AG04449 (cell line): ENCODE measurements at regions of chr10 and their contacts with region 1.

Region 1: DNA sequence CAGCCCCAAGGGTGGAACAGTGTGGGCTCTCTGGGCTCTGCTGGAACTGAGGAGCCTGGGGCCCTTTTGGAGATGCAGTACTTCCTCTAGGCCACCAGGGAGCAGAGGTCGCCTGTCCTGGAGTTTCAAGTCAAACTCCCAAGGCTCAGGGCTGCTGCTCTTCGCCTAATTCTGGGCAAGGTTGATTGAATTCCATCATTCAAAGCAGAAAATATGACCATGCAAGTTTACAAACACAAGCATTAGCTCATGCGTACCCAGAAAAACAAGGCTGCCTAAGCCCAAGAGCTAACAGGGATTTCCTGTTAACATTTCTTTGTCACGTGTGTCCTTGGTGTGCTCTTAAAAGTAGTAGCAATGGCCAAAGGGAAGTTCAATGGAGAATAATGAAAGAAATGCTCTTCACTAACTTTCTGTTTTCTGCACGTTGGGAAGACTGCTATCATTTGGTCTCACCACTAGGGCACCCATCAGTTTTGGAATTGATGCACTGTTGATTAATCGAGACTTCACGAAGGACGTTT is 20.1 kb downstream of the LDB3 start:
- DNase-seq: no peak
- H3K4me3 ChIP-seq: no peak overlapping the region; the same call in 1 of the 2 replicates
- CTCF ChIP-seq: peak; percentile 78

Region 2: GRCh38 chr10:86644152-86644793 is 44.2 kb before region 1 on chr10:
- CTCF ChIA-PET with region 1: interaction called, 10 read pairs
- POLR2A ChIA-PET with region 1: no interaction called
- DNase-seq: no peak
- H3K4me3 ChIP-seq: no peak overlapping the region
- CTCF ChIP-seq: peak; percentile 33

Region 3: DNA sequence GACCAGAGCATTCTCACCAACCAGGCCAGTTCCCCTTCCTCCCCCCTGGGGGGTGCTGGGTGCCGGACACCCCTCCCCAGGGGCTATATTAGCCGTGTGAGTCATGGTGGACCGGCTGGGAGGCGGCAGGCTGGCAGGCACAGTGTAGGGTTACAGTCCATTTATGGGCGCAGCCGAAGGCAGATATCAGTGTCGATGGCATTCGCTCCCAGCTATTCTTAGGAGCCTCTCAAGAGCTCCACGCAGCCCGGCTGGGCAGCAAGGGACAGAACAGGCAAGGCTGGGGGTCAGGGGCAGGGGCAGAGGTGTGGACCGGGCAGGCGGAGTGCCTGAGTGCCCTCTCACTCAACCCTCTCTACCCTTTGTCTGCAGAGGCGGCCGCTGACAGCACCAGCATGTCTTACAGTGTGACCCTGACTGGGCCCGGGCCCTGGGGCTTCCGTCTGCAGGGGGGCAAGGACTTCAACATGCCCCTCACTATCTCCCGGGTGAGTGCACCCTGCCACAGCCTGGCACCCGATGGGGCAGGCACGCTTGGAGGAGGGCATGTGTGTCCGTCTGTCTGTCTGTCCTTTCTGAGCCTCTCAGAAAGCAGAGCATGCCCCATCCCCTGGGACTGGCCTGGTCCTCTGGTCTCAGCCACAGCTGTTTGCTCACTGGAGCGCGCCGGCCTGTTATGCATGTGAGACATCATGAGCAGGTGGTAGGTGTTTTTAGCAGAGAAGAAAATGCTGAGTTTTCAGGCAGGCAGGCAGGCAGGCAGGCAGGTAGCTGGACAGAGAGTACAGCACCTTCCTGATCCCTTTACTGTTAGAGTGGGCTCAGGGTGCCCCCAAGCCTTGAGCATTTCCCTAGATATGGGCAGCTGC is 19.9 kb before region 1 on chr10 and contains the start of gene LDB3:
- CTCF ChIA-PET with region 1: interaction called, 18 read pairs
- POLR2A ChIA-PET with region 1: no interaction called
- DNase-seq: peak; percentile 41
- H3K4me3 ChIP-seq: peak within 1 kb of the TSS; percentile 48
- CTCF ChIP-seq: no peak

Region 4: GRCh38 chr10:86673827-86674581 is 14.5 kb before region 1 on chr10:
- CTCF ChIA-PET with region 1: interaction called, 18 read pairs
- POLR2A ChIA-PET with region 1: interaction called, 5 read pairs
- DNase-seq: no peak
- H3K4me3 ChIP-seq: no peak overlapping the region
- CTCF ChIP-seq: no peak

Region 5: GRCh38 chr10:86857128-86857721 is 168.8 kb after region 1 on chr10:
- CTCF ChIA-PET with region 1: no interaction called
- POLR2A ChIA-PET with region 1: no interaction called
- DNase-seq: no peak
- H3K4me3 ChIP-seq: no peak overlapping the region
- CTCF ChIP-seq: no peak

Region 6: DNA sequence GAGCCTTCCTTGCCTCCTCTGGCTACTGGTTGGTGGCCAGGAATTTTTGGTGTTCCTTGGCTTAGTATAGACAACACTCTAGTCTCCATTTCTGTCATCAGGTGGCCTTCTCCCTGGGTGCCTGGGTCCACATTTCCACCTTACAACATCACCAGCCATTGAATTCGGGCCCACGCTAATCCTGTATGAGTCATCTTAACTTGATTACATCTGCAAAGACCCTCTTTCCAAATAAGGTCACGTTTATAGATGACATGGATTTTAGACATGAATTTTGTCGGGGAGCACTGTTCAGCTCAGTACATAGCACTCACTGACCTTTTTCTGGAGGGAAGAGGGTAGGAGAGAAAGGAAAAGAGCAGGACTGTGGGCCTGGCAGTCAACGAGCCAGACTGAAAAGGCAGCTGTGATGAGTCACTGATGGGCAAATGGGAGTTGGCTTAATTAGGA is 229.6 kb after region 1 on chr10:
- CTCF ChIA-PET with region 1: interaction called, 13 read pairs
- POLR2A ChIA-PET with region 1: no interaction called
- DNase-seq: no peak
- H3K4me3 ChIP-seq: no peak overlapping the region
- CTCF ChIP-seq: no peak

Region 7: GRCh38 chr10:86936661-86937501 is 248.4 kb after region 1 on chr10:
- CTCF ChIA-PET with region 1: interaction called, 19 read pairs
- POLR2A ChIA-PET with region 1: no interaction called
- DNase-seq: no peak
- H3K4me3 ChIP-seq: no peak overlapping the region
- CTCF ChIP-seq: no peak

Region 8: GRCh38 chr10:86971232-86971991 is 283.0 kb after region 1 on chr10:
- CTCF ChIA-PET with region 1: interaction called, 12 read pairs
- POLR2A ChIA-PET with region 1: no interaction called
- DNase-seq: no peak
- H3K4me3 ChIP-seq: peak overlapping the region; percentile 65
- CTCF ChIP-seq: peak; percentile 3